GM12878 (cell line): ENCODE measurements at regions of chr1 and their contacts with region 1.

Region 1: DNA sequence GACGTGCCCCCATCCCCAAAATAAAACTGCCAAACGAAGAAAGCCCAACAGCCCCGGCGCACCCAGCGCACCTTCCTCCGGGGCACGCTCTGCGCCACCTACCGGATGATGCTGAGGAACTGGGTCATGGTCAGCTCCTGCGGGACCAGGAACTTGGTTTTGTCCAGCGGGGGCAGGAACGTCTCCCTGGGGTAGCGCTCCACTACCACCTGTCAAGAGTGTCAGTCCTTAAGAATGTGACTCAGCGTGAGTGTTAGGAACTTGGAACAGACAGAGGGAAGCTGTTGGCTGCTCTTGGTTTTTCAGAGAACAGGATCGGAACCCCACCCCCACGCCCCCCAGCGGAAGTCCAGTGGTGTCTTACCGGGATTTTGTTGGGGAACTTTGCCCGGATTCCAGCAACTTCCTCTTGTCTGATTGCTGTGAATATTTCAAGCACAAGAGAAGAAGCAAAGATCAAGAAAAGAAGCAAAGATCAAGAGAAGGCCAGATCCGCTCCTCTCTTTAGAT is 431 bp downstream of the MAP1LC3C start:
- DNase-seq: no peak
- ATAC-seq: peak; percentile 91
- H3K4me3 ChIP-seq: peak overlapping the region; percentile 47; the same call in 1 of the 2 replicates
- H3K27ac ChIP-seq: no peak overlapping the region
- H3K4me1 ChIP-seq: no peaks in the 10 kb centered on the region; the same call in 1 of the 2 replicates
- H3K27me3 ChIP-seq: no peaks in the 10 kb centered on the region; a peak in 1 of 4 replicates
- CTCF ChIP-seq: peak; percentile 37 to 88 (median 70)
- EP300 ChIP-seq: no peak
- POLR2A ChIP-seq: no peak
- RAD21 ChIP-seq: peak; percentile 38

Region 2: GRCh38 chr1:241847796-241848685 is 150.4 kb before region 1 on chr1 and contains the start of gene EXO1:
- CTCF ChIA-PET with region 1: interaction called, 10 read pairs
- POLR2A ChIA-PET with region 1: no interaction called
- RAD21 ChIA-PET with region 1: no interaction called
- SMC1A ChIA-PET with region 1: no interaction called
- in situ Hi-C with region 1: no loop called
- intact Hi-C with region 1: loop called (anchors 5 kb)
- DNase-seq: peak; percentile 61
- ATAC-seq: peak; percentile 96
- H3K4me3 ChIP-seq: peak within 1 kb of the TSS; percentile 89
- H3K27ac ChIP-seq: peak within 1 kb of the TSS; percentile 92
- H3K4me1 ChIP-seq: no peaks in the 10 kb centered on the region; the same call in 1 of the 2 replicates
- H3K27me3 ChIP-seq: no peaks in the 10 kb centered on the region
- CTCF ChIP-seq: peak; percentile 55 to 65 (median 57)
- EP300 ChIP-seq: no peak
- POLR2A ChIP-seq: peak; percentile 88
- RAD21 ChIP-seq: peak; percentile 48
- polyA plus RNA-seq, gene EXO1: 8.7 to 17.6 TPM

Region 3: GRCh38 chr1:241895013-241895412 is 103.5 kb before region 1 on chr1:
- CTCF ChIA-PET with region 1: interaction called, 39 read pairs
- POLR2A ChIA-PET with region 1: no interaction called
- RAD21 ChIA-PET with region 1: interaction called, 3 read pairs
- SMC1A ChIA-PET with region 1: interaction called, 5 read pairs
- in situ Hi-C with region 1: loop called (anchors 5 kb)
- intact Hi-C with region 1: loop called (anchors 1 kb)
- DNase-seq: no peak
- ATAC-seq: peak; percentile 84
- H3K4me3 ChIP-seq: no peak overlapping the region
- H3K27ac ChIP-seq: no peak overlapping the region
- H3K4me1 ChIP-seq: peaks cover 3% of the 10 kb centered on the region; the same call in 1 of the 2 replicates
- H3K27me3 ChIP-seq: no peaks in the 10 kb centered on the region
- CTCF ChIP-seq: no peak
- EP300 ChIP-seq: no peak
- POLR2A ChIP-seq: no peak
- RAD21 ChIP-seq: no peak

Region 4: DNA sequence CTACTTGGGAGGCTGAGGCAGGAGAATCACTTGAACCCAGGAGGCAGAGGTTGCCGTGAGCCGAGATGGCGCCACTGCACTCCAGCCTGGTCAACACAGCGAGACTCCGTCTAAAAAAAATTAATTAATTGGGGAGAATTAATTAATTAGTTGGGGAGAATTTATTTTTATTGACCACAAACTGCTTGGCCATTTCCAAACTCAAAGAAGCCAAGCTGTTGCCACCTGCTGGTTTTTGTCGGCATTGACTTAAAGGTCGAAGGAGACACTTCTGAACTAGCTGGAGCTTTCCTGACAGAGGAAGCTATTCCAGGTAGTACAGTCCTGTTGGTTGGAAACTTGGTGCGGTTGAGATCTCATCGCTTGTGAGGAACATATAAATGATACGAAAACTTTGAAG is 12.7 kb before region 1 on chr1:
- CTCF ChIA-PET with region 1: interaction called, 17 read pairs
- POLR2A ChIA-PET with region 1: no interaction called
- RAD21 ChIA-PET with region 1: interaction called, 6 read pairs
- SMC1A ChIA-PET with region 1: interaction called, 5 read pairs
- in situ Hi-C with region 1: no loop called
- intact Hi-C with region 1: no loop called
- DNase-seq: no peak
- ATAC-seq: peak; percentile 19; the same call in 1 of the 3 replicates
- H3K4me3 ChIP-seq: no peak overlapping the region
- H3K27ac ChIP-seq: no peak overlapping the region
- H3K4me1 ChIP-seq: no peaks in the 10 kb centered on the region
- H3K27me3 ChIP-seq: no peaks in the 10 kb centered on the region
- CTCF ChIP-seq: peak; percentile 45 to 52 (median 52); a peak in 5 of 6 replicates
- EP300 ChIP-seq: no peak
- POLR2A ChIP-seq: no peak
- RAD21 ChIP-seq: peak; percentile 51

Region 5: DNA sequence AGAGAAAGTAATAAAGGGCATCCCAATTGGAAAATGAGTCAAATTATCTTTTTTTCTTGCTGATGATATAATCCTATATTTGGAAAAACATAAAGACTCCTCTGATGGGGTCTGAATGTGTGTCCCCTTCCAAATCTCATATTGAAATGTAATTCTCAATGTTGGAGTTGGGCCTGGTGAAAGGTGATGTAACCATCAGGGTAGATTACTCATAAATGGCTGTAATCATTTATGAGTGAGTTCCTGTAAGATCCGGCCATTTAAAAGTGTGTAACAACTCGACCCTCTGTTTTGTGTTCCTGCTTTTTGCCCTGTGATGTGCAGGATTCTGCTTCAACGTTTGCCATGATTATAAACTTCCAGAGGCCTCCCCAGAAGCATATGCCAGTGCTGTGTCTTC is 44.7 kb after region 1 on chr1:
- CTCF ChIA-PET with region 1: no interaction called
- POLR2A ChIA-PET with region 1: no interaction called
- RAD21 ChIA-PET with region 1: no interaction called
- SMC1A ChIA-PET with region 1: no interaction called
- in situ Hi-C with region 1: no loop called
- intact Hi-C with region 1: no loop called
- DNase-seq: no peak
- ATAC-seq: no peak
- H3K4me3 ChIP-seq: no peak overlapping the region
- H3K27ac ChIP-seq: no peak overlapping the region
- H3K4me1 ChIP-seq: no peaks in the 10 kb centered on the region
- H3K27me3 ChIP-seq: no peaks in the 10 kb centered on the region
- CTCF ChIP-seq: no peak
- EP300 ChIP-seq: no peak
- POLR2A ChIP-seq: no peak
- RAD21 ChIP-seq: no peak

Region 6: DNA sequence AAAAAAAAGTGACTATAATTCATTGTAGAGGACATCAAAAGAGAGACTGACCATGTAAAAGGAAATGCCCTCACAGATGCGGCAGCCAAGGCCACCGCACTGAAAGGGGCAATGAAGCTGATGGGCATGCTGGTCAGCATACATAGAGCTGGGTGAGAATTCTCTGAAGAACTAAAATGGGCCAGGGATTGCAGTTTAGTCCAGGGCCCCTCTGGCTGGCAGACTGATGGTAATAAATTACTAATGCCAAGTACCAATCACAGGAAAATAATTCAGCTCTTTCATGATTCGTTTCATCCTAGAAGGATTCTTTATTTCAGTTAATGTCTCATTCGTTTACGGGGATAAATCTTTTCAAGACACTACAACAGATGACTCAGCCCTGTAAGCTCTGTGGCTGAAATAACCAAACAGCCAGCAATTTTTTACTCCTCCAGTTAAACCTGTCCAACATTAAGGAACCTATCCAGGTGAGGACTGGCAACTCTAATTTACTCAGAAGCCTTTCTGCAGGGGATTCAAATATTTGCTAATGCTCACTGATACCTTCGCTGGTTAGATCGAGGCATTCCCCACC is 57.4 kb after region 1 on chr1:
- CTCF ChIA-PET with region 1: no interaction called
- POLR2A ChIA-PET with region 1: no interaction called
- RAD21 ChIA-PET with region 1: no interaction called
- SMC1A ChIA-PET with region 1: no interaction called
- in situ Hi-C with region 1: no loop called
- intact Hi-C with region 1: no loop called
- DNase-seq: no peak
- ATAC-seq: no peak
- H3K4me3 ChIP-seq: no peak overlapping the region
- H3K27ac ChIP-seq: no peak overlapping the region
- H3K4me1 ChIP-seq: peaks cover 6% of the 10 kb centered on the region; the same call in 1 of the 2 replicates
- H3K27me3 ChIP-seq: no peaks in the 10 kb centered on the region
- CTCF ChIP-seq: no peak
- EP300 ChIP-seq: no peak
- POLR2A ChIP-seq: no peak
- RAD21 ChIP-seq: no peak